ENCODE measurements at regions of chr4 and their contacts with region 1.

Region 1: GRCh38 chr4:168318266-168318895 is at the start of gene DDX60:
- DNase-seq: peak; percentile 81
- ATAC-seq: peak; percentile 95 to 96
- total RNA-seq, gene DDX60: 6.8 to 11.2 TPM

Region 2: GRCh38 chr4:168361365-168362024 is 43.1 kb after region 1 on chr4:
- intact Hi-C with region 1: no loop called
- DNase-seq: no peak
- ATAC-seq: no peak

Region 3: GRCh38 chr4:168411318-168412150 is 93.2 kb after region 1 on chr4:
- intact Hi-C with region 1: loop called in 1 of 2 experiments (anchors 2 kb)
- DNase-seq: no peak
- ATAC-seq: peak in 1 of 2 donors; percentile 27

Region 4: DNA sequence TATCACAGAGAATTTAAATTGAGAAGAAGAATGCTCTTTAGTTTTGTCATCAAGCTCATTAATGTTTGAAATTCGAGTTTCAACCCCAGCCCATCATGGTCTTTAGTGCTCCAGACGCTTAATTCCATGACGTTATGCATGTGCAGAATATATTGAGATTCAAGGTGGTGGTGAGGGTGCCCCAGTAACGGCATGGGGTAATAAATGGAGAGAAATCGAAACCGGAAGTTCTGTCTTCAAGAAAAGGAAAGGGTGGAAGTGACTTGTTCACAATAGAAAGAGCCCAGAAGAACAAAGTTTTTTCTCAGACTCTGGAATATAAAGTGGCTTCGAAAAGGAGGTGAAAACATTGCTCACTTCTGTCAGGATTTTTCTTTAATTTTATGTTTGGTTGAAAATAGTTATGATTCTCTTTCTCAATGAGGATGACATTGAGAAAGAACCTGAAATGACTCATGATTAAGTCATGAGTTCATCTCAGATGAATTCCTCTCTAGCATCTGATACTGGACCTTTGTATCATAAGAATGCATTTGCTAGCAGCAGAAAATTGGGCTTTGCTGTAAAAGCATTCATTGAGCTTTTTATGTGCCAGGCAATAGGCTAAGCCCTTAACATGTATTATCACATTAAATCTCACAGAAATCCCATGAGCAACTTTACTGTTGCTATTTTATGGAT is 162.7 kb after region 1 on chr4:
- intact Hi-C with region 1: loop called in 1 of 2 experiments (anchors 10 kb)
- DNase-seq: no peak
- ATAC-seq: peak; percentile 48 to 62